GM10248 (cell line): ENCODE measurements at regions of chr6 and their contacts with region 1.

Region 1: DNA sequence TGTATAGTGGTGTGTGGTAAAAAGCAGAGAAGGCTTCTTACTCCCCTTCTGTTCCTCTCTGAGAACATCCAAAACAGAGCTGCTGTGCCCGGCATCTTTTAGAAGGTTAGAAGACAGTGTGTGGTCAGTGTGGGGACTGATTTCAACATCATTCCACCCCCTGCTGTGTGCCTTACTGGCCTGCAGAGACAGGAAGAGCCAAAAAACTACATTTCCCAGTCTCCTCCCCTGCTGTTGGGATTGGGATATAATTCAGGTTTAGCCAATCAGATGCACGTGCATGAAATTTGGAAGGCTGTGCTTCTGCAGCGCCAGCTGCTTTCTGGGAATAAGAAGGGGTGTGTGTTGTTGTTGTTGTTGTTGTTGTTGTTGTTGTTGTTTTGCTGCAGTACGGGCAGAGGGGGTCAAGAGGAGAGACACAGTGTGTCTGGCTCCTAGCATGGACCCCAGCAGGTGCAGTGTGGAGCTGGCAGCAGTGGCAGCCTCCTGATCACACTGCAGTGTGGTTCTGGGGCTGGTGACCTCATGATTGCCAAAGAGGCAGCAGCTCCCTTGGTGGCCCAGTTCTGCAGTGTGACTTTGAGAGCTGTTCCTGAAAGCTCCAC is 74.7 kb downstream of the MRPL14 start:
- DNase-seq: no peak
- CTCF ChIP-seq: no peak

Region 2: DNA sequence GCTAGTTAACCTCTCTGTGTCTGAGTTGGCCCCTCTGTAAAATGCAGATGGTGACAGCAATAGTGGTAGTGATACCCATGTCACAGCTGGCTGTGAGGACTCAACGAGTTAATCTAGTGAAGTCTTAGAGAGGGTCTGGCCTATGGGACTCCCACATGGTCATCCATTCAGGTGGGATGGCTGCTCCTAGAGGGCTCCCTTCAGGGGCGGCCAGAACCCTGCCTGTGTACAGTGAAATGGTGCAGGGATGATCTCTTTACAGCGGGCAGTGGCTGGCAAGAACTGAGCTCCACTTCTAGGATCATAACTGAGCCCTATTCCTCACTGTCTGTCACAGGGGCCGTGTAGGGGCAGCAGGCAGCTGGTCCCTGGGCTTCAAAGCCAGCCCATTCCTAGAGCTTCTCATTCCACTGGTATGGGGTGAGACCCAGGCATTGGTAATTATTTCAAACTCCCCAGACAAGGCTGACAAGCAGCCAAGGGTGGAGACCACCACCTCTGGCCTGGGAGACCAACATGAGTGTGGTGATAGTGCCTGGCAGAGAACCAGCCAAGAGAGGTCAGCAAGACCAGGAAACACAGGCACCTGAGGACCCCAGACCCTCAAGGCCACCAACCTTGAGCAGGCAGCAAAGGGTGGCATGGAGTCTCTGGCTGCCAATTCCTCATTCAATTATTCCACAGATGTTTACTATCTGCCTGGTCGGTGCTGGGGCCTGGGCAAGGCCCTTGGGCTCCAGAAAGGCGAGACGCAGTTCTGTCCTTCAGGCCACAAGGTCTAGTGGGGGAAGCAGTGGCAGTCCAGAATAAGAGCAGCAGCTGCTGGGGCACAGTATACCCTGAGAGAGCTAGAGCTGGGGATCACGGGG is 28.7 kb before region 1 on chr6:
- CTCF ChIA-PET with region 1: no interaction called
- POLR2A ChIA-PET with region 1: no interaction called
- DNase-seq: no peak
- CTCF ChIP-seq: no peak

Region 3: DNA sequence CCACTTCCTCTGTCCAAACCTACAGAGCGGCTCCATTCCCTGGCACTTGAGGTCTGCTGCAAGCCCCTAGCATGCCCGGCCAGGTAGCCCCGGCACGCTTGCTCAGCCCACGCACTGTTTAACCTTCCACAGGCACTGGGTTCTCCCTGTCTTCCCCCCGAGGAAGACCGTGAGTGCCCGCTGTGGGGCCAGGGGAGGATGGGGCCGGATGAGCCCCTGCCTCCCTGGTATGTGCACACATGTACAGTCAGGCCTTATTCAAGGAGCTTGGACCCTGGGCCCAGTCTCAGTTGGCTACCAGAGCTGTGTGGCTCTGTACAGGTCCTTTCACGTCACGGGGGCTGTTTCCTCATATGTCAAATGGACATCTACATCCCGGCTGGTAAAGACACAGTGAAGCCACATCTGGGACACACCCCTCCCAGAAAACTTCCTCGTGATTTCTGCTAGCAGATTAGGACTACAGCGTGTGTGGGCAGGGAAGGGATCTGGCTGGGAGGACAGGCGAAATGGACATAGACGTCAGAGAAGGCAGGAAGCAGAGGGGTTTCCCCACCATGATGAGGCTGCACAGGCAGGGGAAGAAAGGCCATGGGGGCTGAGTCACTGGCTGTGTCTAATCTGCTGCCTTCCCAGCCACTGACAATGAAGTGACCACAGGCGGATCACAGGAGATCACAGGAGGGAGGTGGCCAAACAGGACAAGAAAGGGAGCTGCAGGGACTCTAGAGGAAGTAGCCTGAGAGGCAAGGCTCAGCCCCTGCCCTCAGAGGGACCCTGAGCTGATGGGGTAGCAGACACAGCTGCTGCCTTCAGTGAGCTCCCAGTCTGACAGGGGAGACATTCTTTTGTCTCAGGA is 11.8 kb after region 1 on chr6:
- CTCF ChIA-PET with region 1: interaction called, 24 read pairs
- POLR2A ChIA-PET with region 1: no interaction called
- DNase-seq: peak; percentile 62
- CTCF ChIP-seq: no peak

Region 4: DNA sequence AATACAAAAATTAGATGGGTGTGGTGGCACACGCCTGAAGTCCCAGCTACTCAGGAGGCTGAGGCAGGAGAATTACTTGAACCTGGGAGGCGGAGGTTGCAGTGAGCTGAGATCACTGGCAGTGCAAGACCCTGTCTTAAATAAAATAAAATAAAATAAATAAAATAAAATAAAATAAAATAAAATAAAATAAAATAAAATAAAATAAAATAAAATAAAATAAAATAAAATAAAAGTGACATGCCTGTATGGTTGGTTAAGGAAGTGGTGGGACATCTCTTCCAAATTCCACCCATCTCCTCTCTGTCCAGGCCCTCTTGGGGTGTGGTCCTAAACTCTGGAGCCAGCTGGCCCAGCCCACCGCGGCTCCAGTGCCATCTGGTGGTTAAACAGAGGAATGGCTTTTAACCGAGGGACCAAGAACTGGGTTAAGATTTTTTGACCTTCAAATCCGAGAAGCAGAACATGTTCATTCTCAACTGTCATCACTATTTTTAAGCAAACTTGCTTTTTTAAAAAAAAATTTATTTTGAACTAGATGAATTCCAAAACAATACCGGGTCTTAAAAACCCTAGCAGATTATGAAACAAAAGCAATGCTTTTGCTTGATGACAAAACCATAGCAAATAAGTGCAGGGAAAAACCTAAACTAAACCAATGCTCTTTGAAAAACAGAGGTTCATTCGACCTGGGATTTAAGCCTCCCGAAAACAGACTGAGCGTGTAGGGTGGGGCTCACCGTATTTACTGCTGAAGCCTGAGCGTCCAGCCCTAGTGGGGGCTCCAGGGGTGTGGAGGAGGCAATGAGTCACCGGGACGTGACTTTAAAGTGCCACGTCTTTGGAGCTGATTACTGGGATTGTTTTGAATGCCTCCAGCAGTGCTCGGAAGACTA is 403.8 kb after region 1 on chr6:
- CTCF ChIA-PET with region 1: no interaction called
- POLR2A ChIA-PET with region 1: no interaction called
- DNase-seq: peak; percentile 78
- CTCF ChIP-seq: peak; percentile 70